Mammary epithelial cell (primary cell): ENCODE measurements at regions of chr12 and their contacts with region 1.

Region 1: GRCh38 chr12:58920102-58920960 is at the start of gene LRIG3:
- DNase-seq: peak; percentile 88
- H3K4me3 ChIP-seq: peak within 1 kb of the TSS; percentile 69 to 88 (median 78)
- H3K27ac ChIP-seq: peak within 1 kb of the TSS; percentile 92
- H3K4me1 ChIP-seq: peaks cover 9% of the 10 kb centered on the region
- H3K27me3 ChIP-seq: no peaks in the 10 kb centered on the region
- CTCF ChIP-seq: peak in 1 of 2 donors; percentile 28
- total RNA-seq, gene LRIG3: 45.5 to 115 TPM

Region 2: DNA sequence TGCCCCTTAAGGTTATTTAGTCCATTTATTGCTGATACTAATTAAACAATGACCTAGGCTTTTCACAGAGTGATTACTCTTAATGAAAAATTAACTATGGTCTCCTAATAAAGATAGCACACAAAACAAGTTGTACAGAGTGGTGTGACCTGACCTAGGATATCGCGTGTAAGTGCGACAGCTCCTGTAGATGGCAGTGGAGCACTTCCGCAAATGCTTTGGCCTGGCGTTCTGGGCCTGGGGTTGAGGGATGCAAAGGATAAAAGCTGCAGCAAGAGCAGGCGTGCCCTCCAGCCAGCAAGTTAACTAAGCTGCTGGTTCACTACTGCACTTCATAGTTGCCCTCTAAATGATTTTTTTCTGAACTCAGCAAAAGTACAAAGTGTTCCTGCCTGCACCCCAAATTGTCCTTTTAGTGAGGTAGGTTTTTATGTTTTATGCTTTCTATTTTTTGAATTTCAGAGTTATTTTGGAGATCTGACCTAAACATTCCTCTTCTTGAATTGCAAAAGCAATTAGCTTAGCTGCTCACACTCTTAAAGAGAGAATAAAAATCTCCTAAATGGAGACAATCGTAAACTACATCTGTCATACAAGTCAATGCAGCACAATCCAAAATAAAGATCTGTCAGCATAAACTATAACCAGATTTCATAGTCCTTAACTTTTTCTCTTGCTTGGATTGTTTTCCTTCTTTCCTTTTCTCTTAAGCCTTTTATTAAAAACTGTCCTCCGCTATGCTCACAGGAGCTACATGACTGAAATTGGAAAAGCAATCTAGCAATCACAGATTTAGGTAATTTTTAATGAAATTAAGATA is 379.6 kb before region 1 on chr12:
- CTCF ChIA-PET with region 1: interaction called, 7 read pairs
- dilution Hi-C with region 1: no loop called
- in situ Hi-C with region 1: no loop called
- intact Hi-C with region 1: loop called (anchors 1 kb)
- DNase-seq: peak; percentile 62
- H3K4me3 ChIP-seq: no peak overlapping the region
- H3K27ac ChIP-seq: no peak overlapping the region
- H3K4me1 ChIP-seq: peaks cover 27% of the 10 kb centered on the region
- H3K27me3 ChIP-seq: no peaks in the 10 kb centered on the region
- CTCF ChIP-seq: peak; percentile 68 to 90

Region 3: GRCh38 chr12:58566599-58566998 is 353.7 kb before region 1 on chr12:
- CTCF ChIA-PET with region 1: no interaction called
- dilution Hi-C with region 1: no loop called
- in situ Hi-C with region 1: no loop called
- intact Hi-C with region 1: no loop called
- DNase-seq: no peak
- H3K4me3 ChIP-seq: no peak overlapping the region
- H3K27ac ChIP-seq: no peak overlapping the region
- H3K4me1 ChIP-seq: no peaks in the 10 kb centered on the region
- H3K27me3 ChIP-seq: no peaks in the 10 kb centered on the region
- CTCF ChIP-seq: no peak

Region 4: GRCh38 chr12:58882826-58883225 is 37.5 kb before region 1 on chr12:
- CTCF ChIA-PET with region 1: interaction called, 3 read pairs
- dilution Hi-C with region 1: loop called (anchors 5 kb)
- in situ Hi-C with region 1: no loop called
- intact Hi-C with region 1: loop called (anchors 1 kb)
- DNase-seq: no peak
- H3K4me3 ChIP-seq: no peak overlapping the region
- H3K27ac ChIP-seq: no peak overlapping the region
- H3K4me1 ChIP-seq: peaks cover 3% of the 10 kb centered on the region
- H3K27me3 ChIP-seq: no peaks in the 10 kb centered on the region
- CTCF ChIP-seq: no peak

Region 5: DNA sequence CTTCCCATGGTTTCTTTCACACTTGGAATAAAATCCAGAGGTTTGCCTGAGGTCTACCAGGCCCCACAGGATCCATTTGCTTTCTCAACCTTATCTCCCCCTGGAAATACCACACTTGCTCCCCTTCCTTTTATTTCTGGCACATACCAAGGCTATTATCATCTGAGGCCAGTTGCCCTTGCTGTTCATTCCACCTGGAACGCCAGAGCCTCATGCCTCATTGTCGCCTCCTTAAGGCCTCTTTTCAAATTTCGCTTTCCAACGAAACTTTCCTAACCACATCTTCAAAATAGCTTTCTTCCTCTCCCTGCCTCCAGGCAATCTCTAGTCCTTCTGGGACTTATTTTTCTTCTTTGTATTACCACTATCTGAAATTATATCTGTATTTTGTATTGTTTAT is 11.2 kb after region 1 on chr12:
- CTCF ChIA-PET with region 1: no interaction called
- dilution Hi-C with region 1: no loop called
- in situ Hi-C with region 1: no loop called
- intact Hi-C with region 1: no loop called
- DNase-seq: no peak
- H3K4me3 ChIP-seq: no peak overlapping the region
- H3K27ac ChIP-seq: no peak overlapping the region
- H3K4me1 ChIP-seq: no peaks in the 10 kb centered on the region
- H3K27me3 ChIP-seq: no peaks in the 10 kb centered on the region
- CTCF ChIP-seq: peak in 1 of 2 donors; percentile 4

Region 6: GRCh38 chr12:58950739-58951100 is 30.4 kb after region 1 on chr12:
- CTCF ChIA-PET with region 1: no interaction called
- dilution Hi-C with region 1: no loop called
- in situ Hi-C with region 1: no loop called
- intact Hi-C with region 1: no loop called
- DNase-seq: no peak
- H3K4me3 ChIP-seq: no peak overlapping the region
- H3K27ac ChIP-seq: no peak overlapping the region
- H3K4me1 ChIP-seq: no peaks in the 10 kb centered on the region
- H3K27me3 ChIP-seq: no peaks in the 10 kb centered on the region
- CTCF ChIP-seq: no peak

Region 7: GRCh38 chr12:59041241-59042121 is 121.2 kb after region 1 on chr12:
- CTCF ChIA-PET with region 1: interaction called, 3 read pairs
- dilution Hi-C with region 1: no loop called
- in situ Hi-C with region 1: no loop called
- intact Hi-C with region 1: loop called (anchors 2 kb)
- DNase-seq: peak; percentile 98
- H3K4me3 ChIP-seq: peak overlapping the region in 2 of 3 experiments; percentile 9 to 18
- H3K27ac ChIP-seq: peak overlapping the region; percentile 91
- H3K4me1 ChIP-seq: peaks cover 62% of the 10 kb centered on the region
- H3K27me3 ChIP-seq: no peaks in the 10 kb centered on the region
- CTCF ChIP-seq: no peak

Region 8: DNA sequence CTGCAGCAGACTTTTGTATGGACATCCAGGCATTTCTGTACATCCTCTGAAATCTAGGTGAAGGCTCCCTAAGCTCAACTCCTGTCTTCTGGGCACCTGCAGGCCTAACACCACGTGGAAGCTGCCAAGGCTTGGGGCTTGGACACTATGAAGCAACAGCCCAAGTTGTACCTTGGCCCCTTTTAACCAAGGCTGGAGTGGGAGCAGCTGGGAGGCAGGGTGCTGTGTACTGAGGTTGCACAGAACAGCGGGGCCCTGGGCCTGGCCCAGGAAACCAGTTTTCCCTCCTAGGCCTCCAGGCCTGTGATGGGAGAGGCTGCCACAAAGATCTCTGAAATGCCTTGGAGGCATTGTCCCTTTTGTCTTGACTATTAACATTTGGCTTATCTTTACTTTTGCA is 214.4 kb after region 1 on chr12:
- CTCF ChIA-PET with region 1: no interaction called
- dilution Hi-C with region 1: no loop called
- in situ Hi-C with region 1: no loop called
- intact Hi-C with region 1: no loop called
- DNase-seq: no peak
- H3K4me3 ChIP-seq: no peak overlapping the region
- H3K27ac ChIP-seq: no peak overlapping the region
- H3K4me1 ChIP-seq: no peaks in the 10 kb centered on the region
- H3K27me3 ChIP-seq: no peaks in the 10 kb centered on the region
- CTCF ChIP-seq: no peak

Region 9: DNA sequence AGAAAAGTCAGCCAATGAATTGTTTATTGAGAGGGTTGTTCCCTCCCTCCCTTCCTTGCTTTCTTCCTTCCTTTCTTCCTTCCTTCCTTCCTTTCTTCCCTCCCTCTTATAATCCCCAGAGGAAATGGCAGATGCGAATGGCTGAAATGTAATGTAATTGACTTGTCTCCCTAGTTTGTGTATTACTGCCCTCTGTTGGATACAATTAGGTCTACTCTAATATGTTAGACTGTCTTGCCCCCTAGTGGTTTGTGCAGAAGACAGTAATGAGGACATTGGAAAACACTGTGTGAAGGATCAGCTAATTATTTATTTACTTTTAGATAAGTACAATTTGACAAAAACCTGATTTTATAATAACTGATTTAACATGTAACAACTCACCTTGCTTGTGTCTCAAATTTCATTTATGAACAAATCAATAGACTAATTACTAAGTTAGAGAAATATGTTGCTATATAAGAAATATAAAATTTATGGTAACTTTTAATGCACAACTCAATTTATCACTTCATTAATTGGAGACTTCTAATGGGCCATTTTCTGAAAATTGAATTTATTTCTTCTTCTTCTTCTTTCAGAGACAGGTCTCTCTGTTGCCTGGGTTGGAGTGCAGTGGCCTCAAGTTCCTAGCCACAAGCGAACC is 229.8 kb after region 1 on chr12:
- CTCF ChIA-PET with region 1: no interaction called
- dilution Hi-C with region 1: no loop called
- in situ Hi-C with region 1: no loop called
- intact Hi-C with region 1: loop called (anchors 2 kb)
- DNase-seq: peak; percentile 68
- H3K4me3 ChIP-seq: no peak overlapping the region
- H3K27ac ChIP-seq: no peak overlapping the region
- H3K4me1 ChIP-seq: no peaks in the 10 kb centered on the region
- H3K27me3 ChIP-seq: no peaks in the 10 kb centered on the region
- CTCF ChIP-seq: peak; percentile 98 to 99